Right cardiac atrium (tissue), 5 donors: ENCODE measurements at regions of chr1 and their contacts with region 1.

Region 1: GRCh38 chr1:223142795-223143536 is at the start of gene TLR5:
- DNase-seq: peak; percentile 87 to 97 (median 96)
- ATAC-seq: peak; percentile 95 to 97
- H3K4me3 ChIP-seq: peak within 1 kb of the TSS; percentile 75
- H3K27ac ChIP-seq: no peak within 1 kb of the TSS
- H3K4me1 ChIP-seq: peaks cover 6% of the 10 kb centered on the region
- H3K27me3 ChIP-seq: no peaks in the 10 kb centered on the region
- total RNA-seq, gene TLR5: 2.0 to 6.8 (median 5.8) TPM

Region 2: GRCh38 chr1:223258741-223259198 is 115.8 kb after region 1 on chr1:
- intact Hi-C with region 1: no loop called
- DNase-seq: no peak
- ATAC-seq: peak in 1 of 2 donors; percentile 48
- H3K4me3 ChIP-seq: no peak overlapping the region
- H3K27ac ChIP-seq: no peak overlapping the region
- H3K4me1 ChIP-seq: no peaks in the 10 kb centered on the region
- H3K27me3 ChIP-seq: no peaks in the 10 kb centered on the region

Region 3: DNA sequence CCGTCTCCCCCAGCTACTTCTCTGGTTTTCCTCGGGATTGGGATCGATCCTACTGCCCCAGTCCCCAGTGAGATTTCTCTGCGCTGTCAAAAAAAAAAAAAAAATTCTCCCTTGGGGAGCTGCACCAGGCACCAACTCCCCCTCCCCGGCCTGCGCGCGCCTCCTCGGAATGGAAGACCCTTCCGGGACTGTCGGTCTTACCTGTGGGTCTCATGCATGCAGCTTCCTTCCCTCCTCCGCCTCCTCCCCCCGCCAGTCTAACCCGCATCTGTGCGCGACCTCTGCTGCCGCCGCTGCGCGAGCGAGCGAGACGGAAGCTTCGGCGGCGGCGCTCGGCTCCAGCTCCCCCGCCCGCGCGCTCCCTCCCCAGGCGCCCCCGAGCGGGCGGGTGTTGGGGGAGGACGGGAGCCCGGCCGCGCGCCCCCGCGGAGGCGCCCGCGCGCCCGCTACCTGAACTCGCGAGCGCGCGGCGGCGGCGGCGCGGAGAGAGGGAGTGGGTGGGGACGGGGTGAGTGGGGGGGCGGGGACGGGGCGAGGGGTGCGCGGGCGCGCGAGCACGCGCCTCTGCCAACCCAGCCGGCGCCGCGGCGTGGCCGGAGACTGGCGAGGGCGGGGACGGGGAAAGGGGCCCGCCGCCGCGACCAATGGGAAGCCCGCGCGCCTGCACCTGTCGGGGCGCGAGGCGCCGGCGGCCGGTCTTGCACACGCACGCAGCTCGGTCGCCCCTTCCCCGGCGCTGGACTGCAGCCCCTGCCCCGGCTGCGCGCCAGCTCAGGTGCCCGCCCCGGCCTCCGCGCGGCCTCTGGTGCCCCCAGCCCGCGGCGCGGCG is 221.1 kb after region 1 on chr1 and contains the start of gene SUSD4:
- intact Hi-C with region 1: loop called in 1 of 4 experiments (anchors 10 kb)
- DNase-seq: peak; percentile 42 to 85 (median 80)
- ATAC-seq: peak; percentile 84 to 86
- H3K4me3 ChIP-seq: peak within 1 kb of the TSS; percentile 76
- H3K27ac ChIP-seq: peak within 1 kb of the TSS; percentile 54
- H3K4me1 ChIP-seq: no peaks in the 10 kb centered on the region
- H3K27me3 ChIP-seq: no peaks in the 10 kb centered on the region
- total RNA-seq, gene SUSD4: 16.7 to 81.7 (median 37.0) TPM

Region 4: DNA sequence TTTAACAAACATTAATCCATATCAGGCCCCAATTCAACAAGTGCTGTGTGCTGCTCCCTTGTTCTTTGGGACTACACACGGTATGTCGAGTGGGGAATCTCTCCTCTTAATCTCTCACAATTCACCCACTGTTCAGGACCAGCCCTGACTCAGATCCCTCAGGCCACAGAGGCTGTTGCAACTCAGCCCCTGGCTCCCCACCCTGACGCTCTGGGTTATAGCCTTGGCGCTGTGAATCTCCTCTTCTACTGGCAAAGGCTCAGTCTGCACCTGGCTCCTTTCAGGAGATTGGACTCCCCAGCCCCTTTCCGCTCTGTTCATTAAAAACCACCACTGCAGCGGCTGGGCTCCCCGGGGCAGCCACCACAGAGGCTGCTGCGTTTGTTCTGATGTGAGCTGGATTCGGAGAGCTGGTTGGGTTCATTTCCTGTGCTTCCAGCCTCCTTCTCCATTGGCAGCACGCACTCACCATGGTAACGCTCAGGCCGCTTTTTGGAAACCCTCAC is 509.5 kb after region 1 on chr1:
- intact Hi-C with region 1: no loop called
- DNase-seq: no peak
- ATAC-seq: no peak
- H3K4me3 ChIP-seq: no peak overlapping the region
- H3K27ac ChIP-seq: no peak overlapping the region
- H3K4me1 ChIP-seq: peaks cover 2% of the 10 kb centered on the region
- H3K27me3 ChIP-seq: no peaks in the 10 kb centered on the region